ENCODE measurements at regions of chr7 and their contacts with region 1.

Region 1: DNA sequence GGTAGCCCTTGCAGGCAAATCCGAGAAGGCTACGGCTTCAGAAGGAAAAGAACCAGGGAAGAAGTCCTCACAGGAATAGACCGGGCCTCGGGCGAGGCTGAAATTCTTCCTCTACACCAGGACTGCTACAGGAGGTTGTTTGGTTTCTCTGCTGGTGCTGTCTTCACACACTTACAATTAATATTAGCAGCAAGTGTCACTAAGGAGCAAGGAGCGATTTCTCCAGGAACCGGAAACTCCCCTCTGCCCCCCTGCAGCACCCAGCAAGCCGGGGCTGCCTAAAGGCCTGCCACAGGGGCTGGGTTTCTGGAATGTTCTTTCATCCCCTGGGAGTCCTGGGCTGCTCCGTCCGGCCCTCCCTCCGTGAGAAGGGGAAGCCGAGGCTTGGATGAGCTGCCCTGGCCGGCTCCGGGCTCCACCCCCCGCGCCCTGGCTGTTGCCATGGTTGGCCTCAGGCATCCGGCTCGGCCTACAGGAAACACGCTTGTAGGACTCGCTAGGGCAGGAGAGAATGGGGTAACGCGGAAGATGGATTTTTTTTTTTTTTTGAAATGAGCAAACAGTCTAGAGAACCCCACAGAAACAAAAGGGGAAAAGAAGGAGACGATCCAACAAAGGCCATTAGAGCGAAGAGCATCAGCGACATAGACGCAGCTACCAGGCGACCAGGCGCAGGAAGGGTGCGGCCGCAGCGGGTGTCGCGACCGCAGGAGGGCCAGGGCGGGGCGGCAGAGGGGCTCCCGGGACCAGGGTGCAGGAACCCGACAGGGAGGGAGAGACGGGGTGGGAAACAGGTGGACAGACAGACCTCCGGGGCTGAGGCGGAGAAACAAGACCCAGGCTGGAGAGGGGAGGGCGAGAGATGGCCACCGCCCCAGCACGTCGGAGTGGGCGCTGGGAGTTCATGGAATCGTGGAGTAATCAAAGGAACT is 33.0 kb downstream of the EN2 start:
- DNase-seq: no peak
- H3K4me3 ChIP-seq: peak overlapping the region; percentile 16 to 54 (median 46)
- H3K27ac ChIP-seq: peak overlapping the region in 3 of 4 donors; percentile 47 to 65 (median 61)
- H3K4me1 ChIP-seq: peaks cover 0 to 15% (median 9%) of the 10 kb centered on the region in 4 donors
- H3K27me3 ChIP-seq: peaks cover 5 to 55% (median 7%) of the 10 kb centered on the region in 3 donors
- CTCF ChIP-seq: no peak
- EP300 ChIP-seq: no peak
- POLR2A ChIP-seq: no peak

Region 2: GRCh38 chr7:155371884-155372781 is 118.8 kb before region 1 on chr7:
- intact Hi-C with region 1: loop called (anchors 10 kb)
- DNase-seq: no peak
- H3K4me3 ChIP-seq: no peak overlapping the region
- H3K27ac ChIP-seq: no peak overlapping the region
- H3K4me1 ChIP-seq: peaks cover 0 to 40% (median 31%) of the 10 kb centered on the region in 4 donors
- H3K27me3 ChIP-seq: peaks cover 54 to 75% (median 75%) of the 10 kb centered on the region in 3 donors
- CTCF ChIP-seq: no peak
- EP300 ChIP-seq: no peak
- POLR2A ChIP-seq: no peak

Region 3: DNA sequence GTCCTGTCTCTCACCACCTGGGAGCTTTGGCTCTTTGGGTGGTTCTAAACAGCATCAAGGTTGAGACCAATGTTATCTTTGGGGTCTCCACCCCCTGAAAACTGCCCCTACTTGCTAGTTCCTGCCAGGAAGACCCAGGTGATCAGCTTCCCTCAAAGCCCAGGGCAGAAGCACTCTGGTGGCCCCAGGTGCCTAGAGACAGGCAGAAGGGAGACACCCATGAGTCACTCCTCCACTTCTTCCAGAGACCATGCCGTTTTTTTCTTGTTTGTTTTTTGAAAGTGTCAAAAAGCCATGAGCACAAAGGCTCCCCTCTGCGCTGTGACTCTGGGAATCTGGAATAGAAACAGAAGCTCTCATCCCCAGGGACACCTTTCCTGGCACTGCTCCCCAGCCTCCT is 105.2 kb before region 1 on chr7:
- intact Hi-C with region 1: no loop called
- DNase-seq: no peak
- H3K4me3 ChIP-seq: no peak overlapping the region
- H3K27ac ChIP-seq: no peak overlapping the region
- H3K4me1 ChIP-seq: peaks cover 0 to 20% (median 17%) of the 10 kb centered on the region in 4 donors
- H3K27me3 ChIP-seq: peaks cover 21 to 85% (median 60%) of the 10 kb centered on the region in 3 donors
- CTCF ChIP-seq: no peak
- EP300 ChIP-seq: no peak
- POLR2A ChIP-seq: no peak